AG04450 (cell line): ENCODE measurements at regions of chr18 and their contacts with region 1.

Region 1: GRCh38 chr18:70086085-70086484 is 119.4 kb downstream of the RTTN start:
- DNase-seq: no peak
- H3K4me3 ChIP-seq: no peak overlapping the region
- H3K27ac ChIP-seq: no peak overlapping the region
- H3K27me3 ChIP-seq: no peaks in the 10 kb centered on the region
- CTCF ChIP-seq: no peak

Region 2: GRCh38 chr18:70075906-70076305 is 10.2 kb before region 1 on chr18:
- CTCF ChIA-PET with region 1: interaction called, 12 read pairs
- POLR2A ChIA-PET with region 1: no interaction called
- DNase-seq: no peak
- H3K4me3 ChIP-seq: no peak overlapping the region
- H3K27ac ChIP-seq: no peak overlapping the region
- H3K27me3 ChIP-seq: no peaks in the 10 kb centered on the region
- CTCF ChIP-seq: peak; percentile 42

Region 3: DNA sequence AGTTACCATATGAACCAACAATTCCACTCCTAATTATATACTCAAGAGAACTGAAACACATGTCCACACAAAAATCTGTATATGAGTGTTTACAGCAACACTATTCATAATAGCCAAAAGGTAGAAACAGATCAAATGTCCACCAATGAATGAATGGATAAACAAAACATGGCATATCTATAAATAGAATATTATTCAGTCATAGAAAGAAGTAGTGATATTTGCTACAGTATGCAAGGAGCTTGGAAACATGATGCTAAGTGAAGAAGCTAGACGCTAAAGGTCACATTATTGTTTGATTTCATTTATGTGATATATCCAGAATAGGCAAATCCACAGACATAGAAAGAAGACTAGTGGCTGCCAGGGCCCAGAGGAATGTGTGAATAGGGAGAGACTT is 27.4 kb after region 1 on chr18:
- CTCF ChIA-PET with region 1: no interaction called
- POLR2A ChIA-PET with region 1: no interaction called
- DNase-seq: no peak
- H3K4me3 ChIP-seq: no peak overlapping the region
- H3K27ac ChIP-seq: no peak overlapping the region
- H3K27me3 ChIP-seq: no peaks in the 10 kb centered on the region
- CTCF ChIP-seq: no peak

Region 4: GRCh38 chr18:70288851-70289328 is 202.8 kb after region 1 on chr18 and contains the start of gene SOCS6:
- CTCF ChIA-PET with region 1: no interaction called
- POLR2A ChIA-PET with region 1: no interaction called
- DNase-seq: peak; percentile 15
- H3K4me3 ChIP-seq: peak within 1 kb of the TSS; percentile 83
- H3K27ac ChIP-seq: peak within 1 kb of the TSS; percentile 63
- H3K27me3 ChIP-seq: no peaks in the 10 kb centered on the region
- CTCF ChIP-seq: no peak; the same call in 1 of the 2 replicates
- polyA plus RNA-seq, gene SOCS6: 21.6 and 26.7 TPM in 2 replicates